ENCODE measurements at regions of chr6 and their contacts with region 1.

Region 1: DNA sequence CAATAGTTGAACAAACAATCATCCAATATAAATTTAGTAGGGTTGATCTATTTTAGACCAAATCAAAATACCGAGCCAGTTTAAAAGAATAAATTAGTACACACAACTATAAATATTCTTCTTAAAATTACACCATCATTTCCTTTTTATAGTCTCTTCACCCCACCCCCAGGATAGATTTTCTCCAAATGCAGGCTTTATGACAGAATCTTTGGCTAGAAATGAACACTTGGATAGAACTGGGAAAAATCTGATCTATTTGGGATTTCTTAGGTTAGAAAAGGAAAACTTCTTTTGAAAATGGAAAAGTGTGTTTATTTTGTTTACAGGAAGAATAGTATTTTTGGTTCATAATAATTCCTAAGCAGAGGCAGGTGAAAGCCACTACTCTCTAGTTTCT is 74.6 kb downstream of the HMGN3 start:
- DNase-seq: no peak
- ATAC-seq: no peak
- H3K4me3 ChIP-seq: no peak overlapping the region
- H3K4me3 Mint-ChIP-seq: no peak overlapping the region
- H3K27ac ChIP-seq: no peak overlapping the region
- H3K27ac Mint-ChIP-seq: no peak overlapping the region
- H3K4me1 ChIP-seq: no peaks in the 10 kb centered on the region
- H3K4me1 Mint-ChIP-seq: no peaks in the 10 kb centered on the region
- H3K27me3 ChIP-seq: no peaks in the 10 kb centered on the region
- H3K27me3 Mint-ChIP-seq: peaks cover 8% of the 10 kb centered on the region
- CTCF ChIP-seq: no peak

Region 2: DNA sequence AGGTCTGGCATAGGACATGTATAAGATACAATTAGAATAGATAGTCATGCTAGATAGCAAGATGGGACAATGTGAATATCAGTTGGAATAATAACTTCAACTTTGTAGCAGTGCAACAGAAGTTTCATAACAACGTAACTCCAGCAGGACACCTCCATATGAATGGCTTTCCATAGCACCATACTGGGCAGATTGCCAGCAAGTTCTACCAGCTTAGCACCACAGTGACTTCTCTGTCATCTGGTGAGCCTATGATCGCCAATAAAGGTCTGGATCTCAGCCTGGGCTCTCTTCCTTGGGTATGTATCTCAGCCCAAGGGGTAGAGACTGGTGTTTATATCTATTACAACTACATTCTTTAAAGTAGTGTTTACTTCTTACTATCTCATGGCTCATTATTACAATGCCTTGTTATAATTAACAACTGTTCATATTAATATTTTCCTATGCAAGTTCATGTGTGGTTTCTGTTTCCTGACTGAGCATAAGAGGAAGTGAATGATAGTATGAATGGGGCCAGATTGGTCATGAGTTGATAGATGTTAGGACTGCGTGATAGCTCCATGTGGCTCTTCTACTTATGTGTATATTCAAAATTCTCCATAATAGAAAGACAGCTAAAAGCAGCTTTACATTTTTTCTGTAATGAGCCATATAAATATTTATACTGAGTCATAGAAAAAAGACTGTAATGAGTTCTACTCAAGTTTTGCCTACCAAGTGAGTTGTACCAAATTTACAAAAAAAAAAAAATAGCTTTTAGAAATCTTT is 1719.5 kb before region 1 on chr6:
- CTCF ChIA-PET with region 1: no interaction called
- POLR2A ChIA-PET with region 1: no interaction called
- intact Hi-C with region 1: no loop called
- DNase-seq: no peak
- ATAC-seq: no peak
- H3K4me3 ChIP-seq: no peak overlapping the region
- H3K4me3 Mint-ChIP-seq: no peak overlapping the region
- H3K27ac ChIP-seq: no peak overlapping the region
- H3K27ac Mint-ChIP-seq: no peak overlapping the region
- H3K4me1 ChIP-seq: no peaks in the 10 kb centered on the region
- H3K4me1 Mint-ChIP-seq: no peaks in the 10 kb centered on the region
- H3K27me3 ChIP-seq: no peaks in the 10 kb centered on the region
- H3K27me3 Mint-ChIP-seq: no peaks in the 10 kb centered on the region
- CTCF ChIP-seq: no peak

Region 3: DNA sequence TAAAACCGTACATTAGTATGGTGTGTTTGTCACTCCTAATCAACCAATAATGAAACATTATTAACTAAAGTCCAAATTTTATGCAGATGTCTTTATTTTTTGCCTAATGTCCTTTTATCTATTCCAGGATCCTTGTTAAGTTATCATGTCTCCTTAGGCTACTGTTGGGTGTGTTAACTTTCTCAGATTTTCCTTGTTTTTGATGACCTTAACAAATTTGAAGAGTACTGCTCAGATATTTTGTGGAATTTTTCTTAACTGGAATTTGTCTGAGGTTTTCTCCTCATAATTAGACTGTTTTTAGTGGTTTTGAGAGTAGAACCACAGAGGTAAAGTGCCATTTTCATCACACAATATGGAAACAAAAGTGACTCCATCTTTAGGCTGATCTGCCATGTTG is 1100.7 kb before region 1 on chr6:
- CTCF ChIA-PET with region 1: no interaction called
- POLR2A ChIA-PET with region 1: no interaction called
- intact Hi-C with region 1: loop called in 1 of 2 experiments (anchors 5 kb)
- DNase-seq: no peak
- ATAC-seq: no peak
- H3K4me3 ChIP-seq: no peak overlapping the region
- H3K4me3 Mint-ChIP-seq: no peak overlapping the region
- H3K27ac ChIP-seq: no peak overlapping the region
- H3K27ac Mint-ChIP-seq: no peak overlapping the region
- H3K4me1 ChIP-seq: no peaks in the 10 kb centered on the region
- H3K4me1 Mint-ChIP-seq: no peaks in the 10 kb centered on the region
- H3K27me3 ChIP-seq: no peaks in the 10 kb centered on the region
- H3K27me3 Mint-ChIP-seq: no peaks in the 10 kb centered on the region
- CTCF ChIP-seq: no peak

Region 4: DNA sequence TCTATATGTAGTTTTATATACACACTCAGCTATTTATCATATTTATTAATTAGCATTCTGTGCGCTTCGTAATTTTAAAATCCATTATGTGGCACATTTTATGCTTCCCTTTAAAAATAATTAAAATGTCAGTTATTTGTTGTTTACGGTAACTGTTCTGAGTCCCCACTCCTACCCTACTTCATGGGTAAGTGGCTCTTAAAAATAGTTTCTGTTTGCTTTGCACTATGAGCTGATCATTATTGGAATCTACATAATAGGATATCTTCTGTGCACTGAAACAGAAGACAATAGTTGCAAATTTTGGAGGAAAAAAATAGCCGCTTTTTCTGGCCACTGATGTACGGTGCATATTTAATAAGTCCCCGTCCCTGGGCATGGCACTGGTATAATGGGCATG is 352.2 kb after region 1 on chr6:
- CTCF ChIA-PET with region 1: no interaction called
- POLR2A ChIA-PET with region 1: no interaction called
- intact Hi-C with region 1: no loop called
- DNase-seq: no peak
- ATAC-seq: no peak
- H3K4me3 ChIP-seq: no peak overlapping the region
- H3K4me3 Mint-ChIP-seq: no peak overlapping the region
- H3K27ac ChIP-seq: no peak overlapping the region
- H3K27ac Mint-ChIP-seq: no peak overlapping the region
- H3K4me1 ChIP-seq: no peaks in the 10 kb centered on the region
- H3K4me1 Mint-ChIP-seq: no peaks in the 10 kb centered on the region
- H3K27me3 ChIP-seq: no peaks in the 10 kb centered on the region
- H3K27me3 Mint-ChIP-seq: no peaks in the 10 kb centered on the region
- CTCF ChIP-seq: no peak